ENCODE measurements at regions of chr2 and their contacts with region 1.

Region 1: DNA sequence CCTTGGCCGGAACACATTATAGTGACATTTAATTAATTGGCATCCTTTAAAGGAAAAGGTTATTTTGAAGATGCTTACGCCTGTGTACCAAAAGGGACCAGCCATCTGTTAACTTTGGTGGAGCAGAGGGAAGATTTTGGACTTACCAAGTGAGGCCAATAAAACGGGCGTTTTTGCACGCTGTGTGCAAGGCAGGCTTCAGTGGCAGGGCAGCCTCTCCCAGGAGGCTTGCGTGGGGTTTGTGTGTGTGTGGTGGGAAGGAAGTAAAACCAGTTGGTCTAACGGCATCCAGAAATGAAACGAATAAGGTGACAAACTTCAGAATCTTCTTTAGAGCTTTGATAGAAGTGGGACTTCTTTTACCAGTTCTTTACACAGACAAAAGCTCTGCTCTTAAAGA is 191.7 kb downstream of the PRKCE start:
- DNase-seq: no peak
- H3K4me3 Mint-ChIP-seq: peak overlapping the region; percentile 5
- H3K27ac Mint-ChIP-seq: peak overlapping the region; percentile 72
- H3K4me1 Mint-ChIP-seq: peaks cover 61% of the 10 kb centered on the region
- H3K27me3 Mint-ChIP-seq: peaks cover 3% of the 10 kb centered on the region

Region 2: DNA sequence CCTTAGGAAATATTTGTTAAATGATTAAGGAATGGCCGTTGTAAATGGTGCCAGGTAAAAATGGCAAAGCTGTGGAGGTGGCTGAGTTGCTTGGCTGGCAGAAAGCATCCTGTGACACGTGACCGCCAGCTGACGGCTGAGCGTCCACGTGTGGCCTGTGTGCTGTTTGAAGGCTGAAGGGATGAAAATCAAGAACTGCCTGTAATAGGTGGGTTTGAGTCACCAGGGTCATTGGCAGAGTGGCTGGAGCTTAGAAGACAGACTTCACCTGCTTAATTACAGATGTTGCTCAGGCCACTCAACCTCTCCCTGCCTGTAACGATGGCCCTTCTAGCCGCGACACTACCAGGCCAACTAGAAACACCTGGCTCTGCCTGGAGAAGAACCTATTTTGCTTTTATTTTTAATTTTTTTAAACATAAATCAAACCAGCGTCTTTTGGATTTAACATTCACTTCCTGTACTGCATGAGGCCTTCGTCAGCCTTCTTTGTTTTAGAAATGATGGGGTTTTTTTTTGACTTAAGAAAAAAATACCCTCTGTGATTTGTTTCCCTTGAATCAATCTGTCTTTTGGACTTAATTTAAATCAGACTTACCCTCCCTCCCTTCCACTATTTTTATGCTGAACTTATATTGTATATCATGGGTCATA is 14.9 kb after region 1 on chr2:
- intact Hi-C with region 1: loop called (anchors 2 kb)
- DNase-seq: no peak
- H3K4me3 Mint-ChIP-seq: no peak overlapping the region
- H3K27ac Mint-ChIP-seq: no peak overlapping the region
- H3K4me1 Mint-ChIP-seq: peaks cover 44% of the 10 kb centered on the region
- H3K27me3 Mint-ChIP-seq: no peaks in the 10 kb centered on the region

Region 3: DNA sequence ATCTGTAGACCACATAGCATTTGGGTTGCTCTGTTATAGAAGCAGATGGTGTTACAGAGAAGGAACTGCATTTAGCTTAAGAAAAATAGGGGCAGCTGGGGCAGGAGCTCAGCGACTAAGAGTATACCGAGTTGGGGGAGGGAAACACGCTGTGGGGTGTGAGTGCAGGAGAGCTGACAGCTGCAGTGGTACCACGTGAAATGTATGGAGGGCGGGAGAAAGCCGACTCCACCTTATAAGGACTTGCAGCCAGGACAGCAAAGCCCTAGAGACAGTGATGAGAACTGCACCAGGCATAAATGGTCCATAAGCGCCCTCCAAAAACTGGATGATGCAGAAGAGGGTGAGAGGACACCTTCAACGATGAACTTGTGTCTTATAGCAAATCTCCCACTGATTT is 45.9 kb after region 1 on chr2:
- intact Hi-C with region 1: no loop called
- DNase-seq: peak; percentile 5
- H3K4me3 Mint-ChIP-seq: no peak overlapping the region
- H3K27ac Mint-ChIP-seq: no peak overlapping the region
- H3K4me1 Mint-ChIP-seq: peaks cover 23% of the 10 kb centered on the region
- H3K27me3 Mint-ChIP-seq: no peaks in the 10 kb centered on the region

Region 4: GRCh38 chr2:45935791-45936622 is 92.9 kb after region 1 on chr2:
- intact Hi-C with region 1: loop called (anchors 5 kb)
- DNase-seq: peak; percentile 34
- H3K4me3 Mint-ChIP-seq: no peak overlapping the region
- H3K27ac Mint-ChIP-seq: no peak overlapping the region
- H3K4me1 Mint-ChIP-seq: peaks cover 4% of the 10 kb centered on the region
- H3K27me3 Mint-ChIP-seq: no peaks in the 10 kb centered on the region

Measured in activated T-helper 1 cell treated with anti-CD3 and anti-CD28 coated beads, Interleukin-12 subunit alpha, Interleukin-12 subunit beta, Interleukin-2, Interleukin-4 antibody, amounts not matched to agents 30 ng/mL and 10 ng/mL and 1 ng/mL, durations not matched to agents 14 hours and 24 hours and 36 hours (primary cell).